ENCODE measurements at regions of chr1 and their contacts with region 1.

Region 1: GRCh38 chr1:171254859-171255605 is 6.7 kb downstream of the FMO1 start:
- DNase-seq: no peak
- ATAC-seq: no peak
- H3K4me3 ChIP-seq: no peak overlapping the region
- H3K27ac ChIP-seq: no peak overlapping the region
- H3K4me1 ChIP-seq: peaks cover 0 to 18% (median 5%) of the 10 kb centered on the region in 12 donors
- H3K27me3 ChIP-seq: peaks cover 0 to 20% (median 3%) of the 10 kb centered on the region in 9 donors
- CTCF ChIP-seq: no peak
- POLR2A ChIP-seq: no peak

Region 2: GRCh38 chr1:171290621-171291020 is 35.6 kb after region 1 on chr1:
- intact Hi-C with region 1: loop called in 1 of 10 experiments (anchors 2 kb)
- DNase-seq: no peak
- ATAC-seq: no peak
- H3K4me3 ChIP-seq: no peak overlapping the region
- H3K27ac ChIP-seq: no peak overlapping the region
- H3K4me1 ChIP-seq: no peaks in the 10 kb centered on the region
- H3K27me3 ChIP-seq: no peaks in the 10 kb centered on the region
- CTCF ChIP-seq: no peak
- POLR2A ChIP-seq: no peak